ENCODE measurements at regions of chr20 and their contacts with region 1.

Region 1: DNA sequence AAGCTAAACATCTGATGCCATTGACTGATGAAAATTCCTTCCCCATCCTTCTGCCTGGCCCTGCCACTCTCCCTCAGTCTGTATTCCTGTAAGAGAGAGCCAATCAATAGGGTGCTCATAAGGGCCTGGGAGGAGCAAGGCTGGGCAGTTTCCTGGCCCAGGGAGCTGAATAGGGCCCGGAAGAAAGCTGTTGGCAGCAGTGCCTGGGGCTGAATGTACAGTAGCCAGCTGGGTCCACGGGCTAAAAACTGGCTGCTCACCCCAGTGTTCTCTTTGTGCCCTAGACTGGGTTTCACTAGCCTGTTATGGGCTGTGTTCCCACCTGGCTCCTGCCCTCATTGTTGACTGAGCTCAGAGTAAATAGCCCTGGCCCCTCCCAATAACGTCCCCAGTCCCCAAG is 1.7 kb upstream of the WFDC2 start:
- DNase-seq: no peak
- CTCF ChIP-seq: no peak

Region 2: GRCh38 chr20:45456632-45457031 is 11.2 kb before region 1 on chr20:
- CTCF ChIA-PET with region 1: interaction called, 58 read pairs
- POLR2A ChIA-PET with region 1: no interaction called
- DNase-seq: peak; percentile 35
- CTCF ChIP-seq: peak; percentile 36